H1 (cell line): ENCODE measurements at regions of chr11 and their contacts with region 1.

Region 1: GRCh38 chr11:119284344-119285157 is 32.4 kb downstream of the MCAM start:
- DNase-seq: no peak
- H3K4me3 ChIP-seq: no peak overlapping the region
- H3K27ac ChIP-seq: no peak overlapping the region
- H3K4me1 ChIP-seq: no peaks in the 10 kb centered on the region
- H3K27me3 ChIP-seq: no peaks in the 10 kb centered on the region
- CTCF ChIP-seq: peak in 2 of 3 experiments; percentile 38 to 44; a peak in 2 of 4 replicates
- EP300 ChIP-seq: no peak
- POLR2A ChIP-seq: no peak
- RAD21 ChIP-seq: peak; percentile 55 to 62

Region 2: DNA sequence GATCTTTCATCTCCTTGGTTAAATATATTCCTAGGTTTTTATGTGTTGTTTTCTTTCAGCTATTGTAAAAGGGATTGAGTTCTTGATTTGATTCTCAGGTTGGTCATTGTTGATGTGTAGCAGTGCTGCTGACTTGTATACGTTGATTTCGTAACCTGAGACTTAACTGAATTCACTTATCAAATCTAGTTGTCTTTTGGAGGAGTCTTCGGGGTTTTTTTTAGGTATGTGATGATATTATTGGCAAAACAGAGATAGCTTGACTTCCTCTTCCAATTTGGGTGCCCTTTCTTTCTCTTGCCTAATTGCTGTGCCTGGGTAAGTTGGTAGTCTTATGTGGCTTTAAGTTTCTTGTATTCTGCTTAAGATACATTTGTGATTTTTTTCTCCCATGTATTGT is 25.6 kb before region 1 on chr11:
- CTCF ChIA-PET with region 1: interaction called, 10 read pairs
- POLR2A ChIA-PET with region 1: interaction called, 3 read pairs
- DNase-seq: no peak
- H3K4me3 ChIP-seq: no peak overlapping the region
- H3K27ac ChIP-seq: no peak overlapping the region
- H3K4me1 ChIP-seq: peaks cover 0 to 3% (median 0%) of the 10 kb centered on the region in 4 experiments; a peak in 3 of 7 replicates
- H3K27me3 ChIP-seq: no peaks in the 10 kb centered on the region
- CTCF ChIP-seq: no peak
- EP300 ChIP-seq: no peak
- POLR2A ChIP-seq: no peak
- RAD21 ChIP-seq: no peak

Region 3: GRCh38 chr11:119273721-119274120 is 10.8 kb before region 1 on chr11:
- CTCF ChIA-PET with region 1: interaction called, 10 read pairs
- POLR2A ChIA-PET with region 1: interaction called, 4 read pairs
- DNase-seq: no peak
- H3K4me3 ChIP-seq: no peak overlapping the region
- H3K27ac ChIP-seq: no peak overlapping the region
- H3K4me1 ChIP-seq: no peaks in the 10 kb centered on the region
- H3K27me3 ChIP-seq: no peaks in the 10 kb centered on the region
- CTCF ChIP-seq: no peak
- EP300 ChIP-seq: no peak
- POLR2A ChIP-seq: no peak
- RAD21 ChIP-seq: no peak

Region 4: GRCh38 chr11:119298726-119299125 is 14.2 kb after region 1 on chr11:
- CTCF ChIA-PET with region 1: interaction called, 12 read pairs
- POLR2A ChIA-PET with region 1: interaction called, 4 read pairs
- DNase-seq: no peak
- H3K4me3 ChIP-seq: no peak overlapping the region
- H3K27ac ChIP-seq: no peak overlapping the region
- H3K4me1 ChIP-seq: no peaks in the 10 kb centered on the region
- H3K27me3 ChIP-seq: no peaks in the 10 kb centered on the region
- CTCF ChIP-seq: no peak
- EP300 ChIP-seq: no peak
- POLR2A ChIP-seq: no peak
- RAD21 ChIP-seq: no peak